ENCODE measurements at regions of chr17 and their contacts with region 1.

Region 1: GRCh38 chr17:14926526-14927122 is 338.5 kb downstream of the PMP22 start:
- DNase-seq: no peak
- ATAC-seq: no peak

Region 2: GRCh38 chr17:13337864-13338371 is 1588.7 kb before region 1 on chr17:
- intact Hi-C with region 1: loop called (anchors 5 kb)
- DNase-seq: no peak
- ATAC-seq: no peak

Measured in Right ventricle myocardium inferior (tissue), 1 donor.